GM12878 (cell line): ENCODE measurements at regions of chr6 and their contacts with region 1.

Region 1: DNA sequence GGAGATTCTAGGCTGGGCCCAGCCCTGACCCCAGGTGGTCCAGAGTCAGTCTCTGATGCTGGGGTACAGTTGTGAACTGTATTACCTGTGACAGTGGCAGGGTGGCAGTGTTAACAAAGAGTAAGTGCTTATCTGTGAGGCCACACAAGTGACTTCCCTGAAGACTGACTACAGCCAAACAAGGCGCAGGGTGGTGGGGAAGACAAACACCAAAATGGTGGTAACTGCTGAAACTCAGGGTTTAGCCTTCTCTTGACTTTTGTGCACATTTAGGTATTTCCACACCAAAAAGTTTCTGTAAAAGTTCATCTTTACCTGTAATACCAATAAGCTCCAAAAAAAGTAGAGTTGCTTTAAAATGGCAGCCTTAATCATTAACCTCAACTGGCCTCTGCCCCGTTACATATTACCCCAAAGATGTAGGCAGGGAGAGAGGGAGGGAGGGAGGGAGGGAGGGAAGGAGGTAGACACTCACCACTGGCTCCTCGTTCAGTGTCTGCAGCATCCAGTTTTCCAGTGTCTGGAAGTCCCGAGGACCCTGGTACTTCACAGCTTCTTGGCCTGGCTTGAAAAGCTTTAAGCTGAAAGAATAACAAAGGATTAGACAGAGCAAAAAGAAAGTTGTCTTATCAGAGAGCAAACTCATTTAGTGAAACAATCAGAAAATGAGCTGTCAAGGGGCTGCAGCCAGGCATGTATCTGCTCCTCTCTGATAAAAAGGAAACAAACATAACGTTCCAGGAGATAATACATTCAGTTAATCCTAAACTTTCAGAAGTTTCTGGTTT is 11.3 kb downstream of the TXNDC5 start:
- DNase-seq: no peak
- ATAC-seq: peak; percentile 77
- H3K4me3 ChIP-seq: no peak overlapping the region
- H3K27ac ChIP-seq: no peak overlapping the region
- H3K4me1 ChIP-seq: peaks cover 21% of the 10 kb centered on the region
- H3K27me3 ChIP-seq: no peaks in the 10 kb centered on the region
- CTCF ChIP-seq: peak; percentile 31 to 50 (median 34); a peak in 4 of 6 replicates
- EP300 ChIP-seq: no peak
- POLR2A ChIP-seq: no peak
- RAD21 ChIP-seq: peak; percentile 65

Region 2: GRCh38 chr6:7439228-7439627 is 460.1 kb before region 1 on chr6:
- CTCF ChIA-PET with region 1: no interaction called
- POLR2A ChIA-PET with region 1: no interaction called
- RAD21 ChIA-PET with region 1: no interaction called
- SMC1A ChIA-PET with region 1: no interaction called
- in situ Hi-C with region 1: no loop called
- intact Hi-C with region 1: no loop called
- DNase-seq: no peak
- ATAC-seq: 0 out of 3 replicates have a peak, but pooled peaks have one; percentile 19
- H3K4me3 ChIP-seq: no peak overlapping the region
- H3K27ac ChIP-seq: no peak overlapping the region
- H3K4me1 ChIP-seq: no peaks in the 10 kb centered on the region
- H3K27me3 ChIP-seq: no peaks in the 10 kb centered on the region
- CTCF ChIP-seq: no peak
- EP300 ChIP-seq: no peak
- POLR2A ChIP-seq: no peak
- RAD21 ChIP-seq: no peak

Region 3: DNA sequence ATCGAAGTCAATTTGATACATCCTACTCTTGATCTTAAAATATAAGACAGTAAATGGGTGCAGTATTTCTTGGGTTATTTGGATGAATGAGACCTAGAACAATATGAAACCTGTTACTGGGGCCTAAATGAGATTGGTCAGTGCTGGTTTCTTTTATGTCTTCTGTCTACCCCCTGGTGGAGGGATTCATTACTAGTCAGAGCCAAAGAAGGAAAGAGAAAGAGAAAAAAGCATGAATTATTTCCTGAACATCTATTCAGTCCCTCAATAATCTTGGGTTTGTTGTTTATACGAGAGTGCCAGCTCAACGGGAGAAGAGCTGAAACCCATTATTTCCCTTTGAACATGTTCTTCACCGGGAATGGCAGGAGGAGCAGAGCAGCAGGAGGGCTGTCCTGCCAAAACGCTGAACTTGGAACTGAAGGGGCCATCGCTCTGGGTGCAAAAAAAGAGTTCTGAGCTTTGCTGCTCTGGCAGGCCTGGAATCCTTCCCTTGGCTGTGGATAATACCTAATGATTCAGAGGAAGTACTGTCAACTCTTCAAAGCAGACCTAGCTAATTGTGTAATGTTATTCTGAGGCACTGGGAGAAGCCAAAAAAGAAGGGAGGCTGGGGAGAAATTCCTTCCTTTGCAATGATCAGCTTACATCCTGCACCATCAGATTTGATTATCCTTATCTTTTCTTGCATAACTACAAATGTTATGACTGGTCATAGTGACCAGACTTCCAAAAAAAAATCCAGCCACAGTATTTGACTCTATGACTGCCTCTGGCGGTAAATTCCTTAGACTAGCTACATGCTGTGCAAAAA is 92.9 kb after region 1 on chr6:
- CTCF ChIA-PET with region 1: interaction called, 12 read pairs
- POLR2A ChIA-PET with region 1: no interaction called
- RAD21 ChIA-PET with region 1: interaction called, 7 read pairs
- SMC1A ChIA-PET with region 1: interaction called, 20 read pairs
- in situ Hi-C with region 1: no loop called
- intact Hi-C with region 1: loop called (anchors 1 kb)
- DNase-seq: peak; percentile 13
- ATAC-seq: peak; percentile 90
- H3K4me3 ChIP-seq: no peak overlapping the region
- H3K27ac ChIP-seq: no peak overlapping the region
- H3K4me1 ChIP-seq: no peaks in the 10 kb centered on the region
- H3K27me3 ChIP-seq: no peaks in the 10 kb centered on the region; a peak in 1 of 4 replicates
- CTCF ChIP-seq: peak; percentile 37 to 57 (median 38)
- EP300 ChIP-seq: no peak
- POLR2A ChIP-seq: no peak
- RAD21 ChIP-seq: peak; percentile 91

Region 4: DNA sequence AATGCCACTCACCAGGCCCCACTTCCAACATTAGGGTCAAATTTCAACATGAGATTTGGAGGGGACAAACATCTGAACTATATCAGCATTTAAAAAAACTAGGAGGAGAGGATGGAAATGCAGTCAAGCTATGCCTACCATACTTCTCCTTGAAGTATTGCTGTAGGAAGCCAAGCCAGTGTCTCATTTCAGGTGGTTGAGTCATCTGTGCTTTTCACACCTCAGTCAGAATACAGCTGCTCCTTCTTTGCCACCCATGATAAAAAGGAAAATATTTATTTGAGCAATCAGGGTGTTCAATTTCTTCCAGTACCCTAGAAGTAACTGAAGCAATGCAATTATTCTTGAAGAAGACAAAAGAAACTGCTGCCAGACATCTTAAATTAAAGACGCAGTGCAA is 250.1 kb after region 1 on chr6:
- CTCF ChIA-PET with region 1: no interaction called
- POLR2A ChIA-PET with region 1: no interaction called
- RAD21 ChIA-PET with region 1: no interaction called
- SMC1A ChIA-PET with region 1: no interaction called
- in situ Hi-C with region 1: no loop called
- intact Hi-C with region 1: no loop called
- DNase-seq: no peak
- ATAC-seq: no peak
- H3K4me3 ChIP-seq: no peak overlapping the region
- H3K27ac ChIP-seq: no peak overlapping the region
- H3K4me1 ChIP-seq: no peaks in the 10 kb centered on the region
- H3K27me3 ChIP-seq: no peaks in the 10 kb centered on the region
- CTCF ChIP-seq: no peak
- EP300 ChIP-seq: no peak
- POLR2A ChIP-seq: no peak
- RAD21 ChIP-seq: no peak